ENCODE measurements at regions of chr15 and their contacts with region 1.

Region 1: DNA sequence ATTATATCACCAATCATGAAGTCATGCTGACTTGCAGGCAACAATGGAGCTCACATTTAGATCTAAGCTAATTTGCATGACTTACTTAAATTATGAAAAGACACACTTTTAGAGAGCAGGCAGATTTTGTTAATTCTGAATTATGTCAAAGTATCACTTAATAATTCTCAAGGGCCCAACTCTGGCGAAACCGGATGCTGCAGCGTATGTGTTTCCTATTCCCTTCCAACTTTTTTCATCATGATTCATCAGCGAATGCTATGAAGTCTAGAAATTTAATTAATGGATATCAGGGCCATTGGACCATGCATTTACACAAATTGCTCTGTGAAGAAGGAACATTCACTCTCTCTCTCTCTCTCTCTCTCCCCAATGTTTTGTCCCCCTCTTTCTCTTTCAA is 63.5 kb upstream of the GOLGA8A start:
- DNase-seq: no peak
- ATAC-seq: no peak
- H3K4me3 ChIP-seq: no peak overlapping the region
- H3K27ac ChIP-seq: no peak overlapping the region
- H3K4me1 ChIP-seq: no peaks in the 10 kb centered on the region
- H3K27me3 ChIP-seq: peaks cover 21% of the 10 kb centered on the region
- CTCF ChIP-seq: no peak
- POLR2A ChIP-seq: no peak
- RAD21 ChIP-seq: no peak

Region 2: GRCh38 chr15:34437687-34438086 is 63.4 kb before region 1 on chr15 and contains the start of gene GOLGA8A:
- CTCF ChIA-PET with region 1: no interaction called
- POLR2A ChIA-PET with region 1: no interaction called
- RAD21 ChIA-PET with region 1: no interaction called
- intact Hi-C with region 1: loop called (anchors 5 kb)
- DNase-seq: peak; percentile 62
- ATAC-seq: peak; percentile 78
- H3K4me3 ChIP-seq: peak within 1 kb of the TSS; percentile 44 to 57
- H3K27ac ChIP-seq: peak within 1 kb of the TSS; percentile 51; the same call in 1 of the 2 replicates
- H3K4me1 ChIP-seq: peaks cover 0 to 11% of the 10 kb centered on the region in 2 experiments; a peak in 2 of 4 replicates
- H3K27me3 ChIP-seq: no peaks in the 10 kb centered on the region
- CTCF ChIP-seq: no peak
- POLR2A ChIP-seq: no peak
- RAD21 ChIP-seq: no peak
- total RNA-seq, gene GOLGA8A: 37.2 TPM